SK-N-SH (cell line): ENCODE measurements at regions of chr6 and their contacts with region 1.

Region 1: GRCh38 chr6:98054453-98054852 is 771.4 kb upstream of the MMS22L start:
- DNase-seq: no peak
- H3K4me3 ChIP-seq: no peak overlapping the region
- H3K27ac ChIP-seq: no peak overlapping the region
- H3K4me1 ChIP-seq: no peaks in the 10 kb centered on the region; a peak in 1 of 4 replicates
- H3K27me3 ChIP-seq: no peaks in the 10 kb centered on the region
- CTCF ChIP-seq: peak; percentile 55
- EP300 ChIP-seq: no peak
- RAD21 ChIP-seq: peak; percentile 37; the same call in 1 of the 2 replicates

Region 2: DNA sequence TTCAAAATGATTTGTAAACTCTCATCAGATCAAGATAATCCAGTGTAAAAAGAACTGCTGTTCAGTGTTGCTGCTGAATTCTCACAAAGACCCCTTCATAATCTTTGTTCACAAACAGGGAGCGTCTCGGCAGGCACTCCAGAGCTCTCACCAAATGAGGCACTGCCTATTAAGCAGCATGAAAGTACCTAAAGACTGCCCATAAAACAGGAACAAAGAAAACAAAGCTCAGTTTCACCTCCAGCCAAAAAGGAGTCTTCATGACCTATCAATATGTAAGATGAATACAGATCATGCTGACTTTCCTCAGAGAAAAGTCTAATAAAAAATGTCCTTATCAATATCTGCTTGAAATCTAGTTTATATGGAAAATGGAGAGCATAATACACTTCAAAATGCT is 1259.0 kb before region 1 on chr6:
- CTCF ChIA-PET with region 1: no interaction called
- POLR2A ChIA-PET with region 1: no interaction called
- DNase-seq: no peak
- H3K4me3 ChIP-seq: no peak overlapping the region
- H3K27ac ChIP-seq: no peak overlapping the region
- H3K4me1 ChIP-seq: no peaks in the 10 kb centered on the region
- H3K27me3 ChIP-seq: no peaks in the 10 kb centered on the region
- CTCF ChIP-seq: no peak
- EP300 ChIP-seq: no peak
- RAD21 ChIP-seq: no peak

Region 3: GRCh38 chr6:98044151-98044561 is 10.3 kb before region 1 on chr6:
- CTCF ChIA-PET with region 1: interaction called, 11 read pairs
- POLR2A ChIA-PET with region 1: no interaction called
- DNase-seq: no peak
- H3K4me3 ChIP-seq: no peak overlapping the region
- H3K27ac ChIP-seq: no peak overlapping the region
- H3K4me1 ChIP-seq: peaks cover 0 to 26% of the 10 kb centered on the region in 2 experiments; a peak in 2 of 4 replicates
- H3K27me3 ChIP-seq: no peaks in the 10 kb centered on the region
- CTCF ChIP-seq: no peak
- EP300 ChIP-seq: no peak
- RAD21 ChIP-seq: no peak